GM10248 (cell line): ENCODE measurements at regions of chr15 and their contacts with region 1.

Region 1: GRCh38 chr15:90482124-90483011 is 47.4 kb upstream of the CRTC3 start:
- DNase-seq: peak; percentile 39
- CTCF ChIP-seq: peak; percentile 68

Region 2: DNA sequence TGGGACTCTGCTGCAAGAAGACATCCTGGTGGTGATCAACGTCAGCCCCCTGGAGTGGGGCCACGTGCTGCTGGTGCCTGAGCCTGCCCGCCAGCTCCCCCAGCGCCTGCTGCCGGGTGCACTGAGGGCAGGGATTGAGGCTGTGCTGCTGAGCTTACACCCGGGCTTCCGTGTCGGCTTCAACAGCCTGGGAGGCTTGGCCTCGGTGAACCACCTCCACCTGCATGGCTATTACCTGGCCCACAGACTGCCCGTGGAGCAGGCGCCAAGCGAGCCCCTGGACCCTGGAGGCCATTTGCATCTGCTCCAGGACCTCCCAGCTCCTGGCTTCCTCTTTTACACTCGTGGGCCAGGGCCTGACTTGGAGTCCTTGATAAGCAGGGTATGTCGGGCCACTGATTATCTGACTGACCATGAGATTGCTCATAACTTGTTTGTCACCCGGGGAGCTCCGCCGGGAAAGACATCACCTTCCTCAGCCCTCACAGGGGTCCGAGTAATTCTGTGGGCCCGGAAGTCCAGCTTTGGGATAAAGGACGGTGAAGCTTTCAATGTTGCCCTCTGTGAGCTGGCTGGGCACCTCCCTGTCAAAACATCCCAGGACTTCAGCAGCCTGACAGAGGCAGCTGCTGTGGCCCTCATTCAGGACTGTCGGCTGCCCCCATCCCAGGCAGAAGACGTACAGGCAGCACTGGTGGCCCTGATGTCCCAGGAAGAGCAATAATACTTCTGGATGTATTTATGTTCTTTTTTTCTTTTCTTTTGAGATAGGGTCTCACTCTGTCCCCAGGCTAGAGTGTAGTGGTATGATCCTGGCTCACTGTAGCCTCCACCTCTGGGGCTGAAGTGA is 240.8 kb before region 1 on chr15:
- CTCF ChIA-PET with region 1: no interaction called
- POLR2A ChIA-PET with region 1: no interaction called
- DNase-seq: no peak
- CTCF ChIP-seq: no peak

Region 3: DNA sequence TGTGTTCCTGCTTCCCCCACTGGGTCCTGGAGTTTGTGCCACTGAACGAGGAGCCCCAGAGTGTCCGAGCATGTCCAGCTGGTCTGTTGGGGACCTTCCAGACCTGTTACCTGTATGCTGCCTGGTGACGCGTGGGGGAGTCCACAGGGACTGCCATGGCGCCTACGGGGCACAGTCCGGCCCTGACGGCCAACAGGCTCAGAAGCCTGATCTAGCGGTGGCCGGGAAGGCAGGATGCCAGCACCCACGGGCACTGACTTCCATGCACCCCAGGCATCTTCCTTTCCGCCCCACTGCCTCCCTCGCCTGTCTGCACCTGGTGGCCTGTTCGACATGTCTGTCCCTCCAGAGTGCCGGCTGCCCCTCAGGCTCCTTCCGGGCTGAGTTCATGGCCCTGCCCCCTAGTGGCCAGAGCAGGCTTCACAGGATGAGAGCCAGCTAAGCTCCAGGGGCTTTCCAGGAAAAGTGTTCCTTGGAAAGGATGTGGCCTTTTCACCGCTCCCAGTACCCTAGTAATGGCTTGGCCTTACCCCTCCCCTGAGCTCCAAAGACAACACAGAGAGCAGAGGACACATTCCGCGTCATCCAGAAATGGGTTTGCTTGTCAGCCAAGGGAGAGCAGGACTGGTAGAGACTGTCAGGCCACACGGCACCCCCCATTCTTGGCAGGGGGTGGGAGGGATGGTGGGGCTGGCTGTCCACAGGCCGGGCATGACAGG is 181.2 kb before region 1 on chr15:
- CTCF ChIA-PET with region 1: interaction called, 12 read pairs
- POLR2A ChIA-PET with region 1: no interaction called
- DNase-seq: peak; percentile 48
- CTCF ChIP-seq: peak; percentile 80

Region 4: GRCh38 chr15:90362936-90363212 is 119.5 kb before region 1 on chr15:
- CTCF ChIA-PET with region 1: interaction called, 53 read pairs
- POLR2A ChIA-PET with region 1: no interaction called
- DNase-seq: no peak
- CTCF ChIP-seq: no peak

Region 5: DNA sequence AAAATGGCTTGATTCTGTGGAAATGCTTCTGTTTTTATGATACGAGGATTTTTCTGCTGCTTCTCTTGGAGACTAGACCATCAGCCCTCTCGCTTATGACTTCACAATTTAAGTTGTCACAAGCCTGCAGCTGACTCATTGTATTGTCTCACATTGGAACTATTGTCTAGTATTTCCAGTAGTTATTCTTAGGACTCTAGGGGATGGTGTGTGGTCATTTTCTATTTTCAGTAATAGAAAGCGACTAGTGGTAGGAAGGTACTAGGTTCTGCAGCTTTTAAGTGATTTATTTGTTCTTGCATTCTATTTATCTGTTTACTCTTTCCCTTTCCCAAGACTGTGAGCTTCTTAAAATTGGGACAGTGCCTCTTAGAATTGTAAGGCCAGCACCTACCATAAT is 19.0 kb before region 1 on chr15:
- CTCF ChIA-PET with region 1: interaction called, 43 read pairs
- POLR2A ChIA-PET with region 1: interaction called, 4 read pairs
- DNase-seq: peak; percentile 52
- CTCF ChIP-seq: no peak

Region 6: DNA sequence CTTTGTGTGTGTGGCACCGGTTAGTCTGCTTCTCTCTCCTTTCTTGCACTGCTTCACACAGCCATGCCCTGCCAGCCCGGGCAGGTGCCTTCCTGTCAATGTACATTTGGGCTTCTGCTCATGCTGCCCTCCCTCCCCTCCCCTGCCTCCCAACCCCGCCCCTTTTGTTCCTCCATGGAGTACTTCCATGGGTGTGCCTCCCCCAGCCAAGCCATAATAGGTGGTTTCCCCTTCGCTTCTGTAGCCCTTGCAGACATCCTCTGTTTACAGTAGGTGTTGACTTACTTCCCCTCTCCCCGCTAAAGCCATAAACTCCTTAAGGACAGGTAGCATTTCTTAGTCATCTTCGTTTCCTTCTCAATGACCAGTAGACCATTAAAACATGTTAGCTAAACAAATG is 15.5 kb after region 1 on chr15:
- CTCF ChIA-PET with region 1: interaction called, 29 read pairs
- POLR2A ChIA-PET with region 1: interaction called, 3 read pairs
- DNase-seq: no peak
- CTCF ChIP-seq: no peak